ENCODE measurements at regions of chr14 and their contacts with region 1.

Region 1: GRCh38 chr14:71166180-71166790 is 259.0 kb downstream of the PCNX1 start:
- DNase-seq: peak; percentile 70
- H3K4me3 ChIP-seq: no peak overlapping the region
- H3K27ac ChIP-seq: no peak overlapping the region
- H3K4me1 ChIP-seq: peaks cover 0 to 12% of the 10 kb centered on the region in 2 experiments; a peak in 1 of 4 replicates
- H3K27me3 ChIP-seq: no peaks in the 10 kb centered on the region
- CTCF ChIP-seq: peak; percentile 64
- EP300 ChIP-seq: no peak
- RAD21 ChIP-seq: peak; percentile 86

Region 2: GRCh38 chr14:71320107-71320733 is 153.9 kb after region 1 on chr14:
- CTCF ChIA-PET with region 1: interaction called, 11 read pairs
- POLR2A ChIA-PET with region 1: no interaction called
- DNase-seq: peak; percentile 95
- H3K4me3 ChIP-seq: peak within 1 kb of the TSS; percentile 95 to 96
- H3K27ac ChIP-seq: peak within 1 kb of the TSS; percentile 79 to 92
- H3K4me1 ChIP-seq: peaks cover 12 to 15% of the 10 kb centered on the region in 2 experiments; a peak in 3 of 4 replicates
- H3K27me3 ChIP-seq: no peaks in the 10 kb centered on the region
- CTCF ChIP-seq: no peak
- EP300 ChIP-seq: no peak
- RAD21 ChIP-seq: no peak; the same call in 1 of the 2 replicates